ENCODE measurements at regions of chrX and their contacts with region 1.

Region 1: GRCh38 chrX:33434256-33435092 is 223.1 kb upstream of the DMD start:
- DNase-seq: peak in 1 of 2 donors; percentile 49
- ATAC-seq: peak; percentile 29

Region 2: GRCh38 chrX:34300871-34301270 is 866.4 kb after region 1 on chrX:
- intact Hi-C with region 1: loop called in 1 of 2 experiments (anchors 10 kb)
- DNase-seq: no peak
- ATAC-seq: no peak